Left cardiac atrium (tissue), 4 donors: ENCODE measurements at regions of chr22 and their contacts with region 1.

Region 1: DNA sequence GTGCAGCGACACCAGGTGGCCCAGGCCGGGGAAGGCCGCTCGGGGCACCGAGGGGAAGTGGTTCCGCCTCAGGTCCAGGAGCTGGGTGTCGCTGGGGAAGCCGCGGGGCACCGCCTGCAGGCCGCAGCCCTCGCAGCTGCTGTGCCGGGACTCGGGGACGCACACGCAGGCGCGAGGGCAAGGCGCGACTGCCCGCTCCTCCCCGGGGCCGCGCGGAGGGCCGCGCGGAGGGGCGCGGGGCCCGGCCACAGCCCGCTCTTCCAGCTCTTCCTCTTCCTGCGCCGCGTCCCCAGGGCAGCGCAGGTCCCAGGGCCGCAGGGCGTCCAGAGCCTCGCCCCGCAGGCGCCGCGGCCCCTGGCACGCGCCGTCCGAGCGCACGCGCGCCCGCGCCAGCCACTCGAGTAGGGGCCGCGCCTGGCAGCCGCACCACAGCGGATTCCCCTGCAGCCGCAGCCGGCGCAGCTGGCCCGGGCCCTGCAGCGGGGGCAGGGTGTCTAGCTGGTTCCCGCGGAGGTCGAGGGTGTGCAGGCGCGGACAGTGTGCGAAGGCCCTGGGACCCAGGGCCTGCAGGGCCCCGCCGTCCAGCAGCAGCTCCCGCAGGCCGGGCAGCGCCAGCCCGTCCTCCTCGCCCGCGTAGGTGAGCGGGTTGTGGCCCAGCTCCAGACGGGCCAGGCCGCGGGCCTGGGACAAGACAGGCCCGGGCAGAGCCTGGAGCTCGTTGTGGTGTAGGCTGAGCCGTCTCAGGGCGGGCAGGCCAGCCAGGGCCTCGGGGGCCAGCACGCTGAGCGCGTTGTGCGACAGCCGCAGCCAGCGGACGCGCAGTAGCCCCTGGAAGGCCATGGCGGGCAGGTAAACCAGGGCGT is 2.8 kb downstream of the CHADL start:
- DNase-seq: peak; percentile 74
- ATAC-seq: peak; percentile 60 to 73

Region 2: GRCh38 chr22:40898850-40899357 is 339.0 kb before region 1 on chr22:
- intact Hi-C with region 1: no loop called
- DNase-seq: no peak
- ATAC-seq: peak; percentile 53

Region 3: GRCh38 chr22:41197038-41197972 is 40.6 kb before region 1 on chr22:
- intact Hi-C with region 1: loop called in 1 of 2 experiments (anchors 5 kb)
- DNase-seq: peak; percentile 87
- ATAC-seq: peak; percentile 97

Region 4: DNA sequence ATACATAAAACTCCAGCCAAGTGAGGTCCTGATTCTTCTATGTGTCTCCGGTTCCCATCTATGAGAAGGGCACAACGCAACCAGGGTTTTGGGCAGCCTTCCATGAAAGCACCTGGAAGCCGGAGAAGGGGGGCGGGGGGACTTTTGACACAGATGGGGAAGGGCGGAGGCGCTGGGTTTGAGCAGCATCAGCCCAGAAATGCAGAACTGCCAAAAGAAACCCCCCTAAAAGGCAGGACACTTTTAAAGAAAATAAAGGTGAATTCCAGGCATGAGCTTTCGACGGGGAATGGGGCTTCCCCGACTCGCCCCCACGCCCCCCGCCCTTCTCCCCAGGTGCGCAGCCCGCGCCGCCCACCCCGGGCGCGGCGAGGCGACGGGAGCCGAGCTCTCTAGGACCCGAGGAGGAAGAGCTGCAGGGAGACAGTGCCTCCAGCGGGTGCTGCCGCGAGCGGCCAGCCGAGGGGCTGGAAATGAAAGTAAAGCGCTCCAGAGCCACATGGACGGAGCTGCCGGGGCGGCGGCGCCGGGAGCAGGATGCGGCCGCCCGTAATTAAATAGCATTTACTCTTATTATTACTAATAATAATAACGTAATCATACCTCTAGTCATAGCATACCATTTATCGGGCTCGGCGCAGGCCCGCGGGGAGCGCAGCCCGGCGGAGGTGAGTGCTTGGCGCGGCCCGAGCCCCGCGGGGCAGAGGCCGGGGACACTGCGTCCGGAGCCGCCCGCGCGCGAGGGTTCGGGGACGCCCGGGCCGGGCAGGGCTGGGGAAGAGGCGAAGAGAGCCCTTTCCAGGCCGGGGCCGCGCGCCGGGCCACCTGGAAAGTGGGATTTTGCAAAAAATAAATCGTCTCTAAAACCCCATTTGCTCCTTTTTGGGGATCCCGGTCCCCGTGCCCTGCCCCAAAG is 63.4 kb after region 1 on chr22 and contains the start of gene ZC3H7B:
- intact Hi-C with region 1: no loop called
- DNase-seq: peak; percentile 84
- ATAC-seq: peak; percentile 97 to 98
- total RNA-seq, gene ZC3H7B: 35.0 to 39.3 TPM